Psoas muscle (tissue), 8 donors: ENCODE measurements at regions of chr11 and their contacts with region 1.

Region 1: GRCh38 chr11:57237204-57237681 is at the start of gene APLNR:
- DNase-seq: no peak
- ATAC-seq: peak in 1 of 4 donors; percentile 41
- H3K4me3 ChIP-seq: peak within 1 kb of the TSS; percentile 60
- H3K27ac ChIP-seq: peak within 1 kb of the TSS; percentile 30
- H3K4me1 ChIP-seq: no peaks in the 10 kb centered on the region
- H3K27me3 ChIP-seq: peaks cover 0 to 17% (median 0%) of the 10 kb centered on the region in 3 donors
- CTCF ChIP-seq: no peak
- total RNA-seq, gene APLNR: 3.5 to 17.0 (median 4.4) TPM

Region 2: GRCh38 chr11:56885177-56885576 is 352.1 kb before region 1 on chr11:
- intact Hi-C with region 1: no loop called
- DNase-seq: no peak
- ATAC-seq: no peak
- H3K4me3 ChIP-seq: no peak overlapping the region
- H3K27ac ChIP-seq: no peak overlapping the region
- H3K4me1 ChIP-seq: no peaks in the 10 kb centered on the region
- H3K27me3 ChIP-seq: no peaks in the 10 kb centered on the region
- CTCF ChIP-seq: no peak

Region 3: DNA sequence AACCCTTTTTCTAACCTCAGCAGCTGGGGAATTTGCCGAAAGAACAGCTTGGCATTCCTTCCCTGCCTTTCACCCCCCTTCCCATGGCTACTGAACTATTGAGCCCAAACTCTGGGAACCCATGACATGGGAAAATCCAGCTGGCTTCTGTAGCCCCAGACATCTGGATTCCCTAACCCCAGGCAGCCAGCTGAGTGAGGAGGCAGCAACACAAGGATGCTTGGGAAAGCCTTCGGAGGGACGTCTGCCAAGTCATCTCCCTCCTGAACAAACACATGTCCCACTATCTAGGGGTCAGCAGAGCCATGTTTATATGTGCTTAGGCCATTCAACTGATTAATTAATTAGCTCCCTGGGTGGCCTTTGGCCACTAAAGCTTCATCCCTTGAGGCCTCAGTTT is 33.9 kb before region 1 on chr11:
- intact Hi-C with region 1: loop called in 1 of 2 experiments (anchors 5 kb)
- DNase-seq: peak; percentile 67 to 87
- ATAC-seq: peak; percentile 42 to 80 (median 70)
- H3K4me3 ChIP-seq: no peak overlapping the region
- H3K27ac ChIP-seq: no peak overlapping the region
- H3K4me1 ChIP-seq: peaks cover 14% of the 10 kb centered on the region
- H3K27me3 ChIP-seq: peaks cover 0 to 26% (median 0%) of the 10 kb centered on the region in 3 donors
- CTCF ChIP-seq: no peak

Region 4: GRCh38 chr11:57311109-57311936 is 74.1 kb after region 1 on chr11:
- intact Hi-C with region 1: no loop called
- DNase-seq: peak; percentile 97 to 99
- ATAC-seq: peak; percentile 89 to 95 (median 90)
- H3K4me3 ChIP-seq: peak overlapping the region; percentile 68
- H3K27ac ChIP-seq: peak overlapping the region; percentile 92
- H3K4me1 ChIP-seq: peaks cover 61% of the 10 kb centered on the region
- H3K27me3 ChIP-seq: no peaks in the 10 kb centered on the region
- CTCF ChIP-seq: no peak